GM13977 (cell line): ENCODE measurements at regions of chr7 and their contacts with region 1.

Region 1: DNA sequence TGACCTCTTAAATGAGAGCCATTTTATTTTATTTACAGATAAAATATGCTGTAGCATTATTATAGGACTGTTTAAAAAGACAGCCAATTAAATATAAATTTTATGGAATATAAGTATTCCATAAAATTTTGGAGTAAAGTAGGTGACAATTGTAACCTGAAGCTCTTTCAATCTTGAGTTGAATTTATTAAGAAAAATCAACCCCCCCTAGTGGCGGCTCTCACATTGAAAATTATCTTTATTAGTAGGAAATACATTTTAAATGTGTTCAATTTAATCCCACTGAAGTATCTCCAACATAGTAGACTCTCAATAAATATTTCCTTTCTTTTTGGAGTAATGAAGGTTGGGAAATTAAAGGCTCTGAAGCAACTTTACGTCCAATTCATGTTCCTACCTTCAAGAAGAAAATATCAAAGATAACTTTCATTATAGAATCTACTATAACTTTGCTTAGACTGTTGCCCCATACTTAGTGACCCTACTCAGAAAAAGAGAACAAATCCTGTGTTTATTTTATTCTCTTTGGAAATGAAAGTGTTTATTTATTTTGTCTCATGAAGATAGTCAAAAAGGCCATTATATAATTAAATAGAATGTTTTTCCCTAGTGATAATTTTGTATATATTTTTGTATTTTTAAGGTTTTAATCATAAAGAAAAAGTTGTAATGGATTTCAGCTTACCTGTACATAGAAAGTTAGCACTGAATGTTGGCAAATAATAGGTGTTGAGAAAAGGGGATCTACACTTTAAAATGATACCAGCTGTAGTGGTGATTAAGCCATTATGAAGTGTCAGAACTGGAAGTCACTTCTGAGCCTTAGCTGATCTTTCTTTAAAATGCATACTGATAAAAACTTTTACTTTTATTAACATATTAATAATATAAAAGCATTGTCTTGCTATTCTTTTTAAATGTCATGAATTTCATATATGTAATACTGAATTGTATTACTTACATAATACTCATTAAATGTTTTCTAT is 3.3 kb downstream of the AHR start:
- DNase-seq: no peak
- CTCF ChIP-seq: peak; percentile 48

Region 2: GRCh38 chr7:16989811-16990413 is 311.9 kb before region 1 on chr7:
- in situ Hi-C with region 1: loop called (anchors 5 kb)
- DNase-seq: no peak
- CTCF ChIP-seq: no peak

Region 3: GRCh38 chr7:17015598-17016031 is 286.1 kb before region 1 on chr7:
- in situ Hi-C with region 1: no loop called
- DNase-seq: no peak
- CTCF ChIP-seq: no peak

Region 4: DNA sequence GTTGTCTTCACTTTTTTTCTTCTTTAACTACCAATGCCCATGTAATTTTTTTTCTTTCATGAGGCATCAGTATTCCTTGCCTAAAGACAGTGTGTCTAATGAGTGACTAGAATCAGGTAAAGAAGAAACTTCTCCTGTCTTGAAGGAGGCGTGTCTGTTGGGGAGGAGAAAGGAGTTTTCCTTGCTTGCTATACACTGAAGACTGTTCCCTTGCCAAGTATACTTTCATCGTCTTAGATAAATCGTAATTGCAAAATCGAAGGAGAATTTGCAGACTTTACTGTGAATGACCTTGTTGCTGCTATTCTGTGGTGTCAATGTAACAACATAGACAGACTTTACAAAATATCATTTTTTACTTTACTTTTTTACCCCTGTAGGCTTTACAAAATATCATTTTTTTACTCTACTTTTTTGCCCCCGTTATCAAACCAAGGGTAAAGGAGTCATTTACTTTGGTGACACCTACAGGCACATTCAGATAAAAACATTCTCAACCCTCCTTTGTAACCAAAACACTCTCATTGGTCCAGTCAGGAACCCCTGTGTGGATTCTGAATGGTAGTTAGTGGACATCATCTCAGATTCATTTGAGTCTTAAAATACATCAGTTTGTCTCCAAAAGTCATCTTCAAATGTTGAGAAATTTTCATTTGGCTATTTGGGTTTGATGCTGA is 229.1 kb after region 1 on chr7:
- in situ Hi-C with region 1: loop called (anchors 25 kb)
- DNase-seq: peak; percentile 20
- CTCF ChIP-seq: peak; percentile 46